Colonic mucosa (tissue), 4 donors: ENCODE measurements at regions of chr22 and their contacts with region 1.

Region 1: GRCh38 chr22:43901976-43902643 is 10.3 kb upstream of the PNPLA5 start:
- DNase-seq: no peak
- H3K4me3 ChIP-seq: no peak overlapping the region
- H3K27ac ChIP-seq: no peak overlapping the region
- H3K4me1 ChIP-seq: no peaks in the 10 kb centered on the region
- H3K27me3 ChIP-seq: no peaks in the 10 kb centered on the region
- CTCF ChIP-seq: no peak

Region 2: GRCh38 chr22:43537014-43537585 is 365.0 kb before region 1 on chr22:
- intact Hi-C with region 1: no loop called
- DNase-seq: no peak
- H3K4me3 ChIP-seq: no peak overlapping the region
- H3K27ac ChIP-seq: no peak overlapping the region
- H3K4me1 ChIP-seq: no peaks in the 10 kb centered on the region
- H3K27me3 ChIP-seq: no peaks in the 10 kb centered on the region
- CTCF ChIP-seq: no peak

Region 3: GRCh38 chr22:43848366-43849171 is 53.5 kb before region 1 on chr22:
- intact Hi-C with region 1: loop called (anchors 10 kb)
- DNase-seq: no peak
- H3K4me3 ChIP-seq: no peak overlapping the region
- H3K27ac ChIP-seq: no peak overlapping the region
- H3K4me1 ChIP-seq: no peaks in the 10 kb centered on the region
- H3K27me3 ChIP-seq: no peaks in the 10 kb centered on the region
- CTCF ChIP-seq: no peak

Region 4: DNA sequence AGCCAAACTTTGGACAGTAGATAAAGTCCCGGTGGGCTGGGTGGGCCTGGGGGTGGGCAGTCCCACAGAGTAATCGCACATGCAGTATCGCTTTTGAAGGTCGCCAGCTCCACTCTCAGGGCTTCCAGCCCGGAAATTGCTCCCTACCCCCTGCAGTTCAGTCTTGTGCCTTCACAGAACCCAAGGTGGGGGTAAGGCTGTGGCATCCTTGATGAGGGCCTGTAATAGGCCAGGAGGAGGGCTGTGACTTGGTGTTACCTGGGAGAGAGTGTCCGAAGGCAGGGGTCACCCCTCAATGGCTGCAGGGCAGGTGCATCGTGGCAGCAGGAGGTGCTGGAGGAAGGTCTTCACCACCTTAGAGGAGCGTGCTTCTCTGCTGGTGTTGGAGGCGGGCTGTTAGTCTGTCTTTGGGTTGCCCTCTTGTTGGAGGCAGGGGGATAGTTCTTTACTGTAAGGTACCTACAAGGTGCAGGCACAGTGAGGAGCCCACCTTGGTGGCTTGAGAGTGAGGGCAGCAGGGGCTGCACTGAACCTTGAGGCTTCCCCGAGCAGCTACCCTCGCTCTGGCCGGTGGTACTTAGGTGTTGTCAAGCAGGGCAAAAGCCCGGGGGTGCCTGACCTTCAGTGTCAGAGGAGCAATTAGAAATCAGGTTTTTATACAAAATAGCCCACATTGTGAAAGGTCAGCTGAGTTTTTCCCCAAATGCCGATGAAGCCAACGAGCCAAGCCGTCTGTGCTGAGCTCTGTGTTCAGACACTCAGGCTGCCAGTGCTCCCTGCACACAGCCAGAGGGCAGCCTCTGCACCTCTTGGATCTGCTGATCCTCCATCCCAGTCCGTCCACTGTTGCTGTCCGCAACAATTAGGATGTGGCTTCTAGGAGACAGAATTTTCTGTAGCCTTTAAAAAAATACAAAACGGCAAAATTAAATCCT is 75.0 kb after region 1 on chr22:
- intact Hi-C with region 1: no loop called
- DNase-seq: no peak
- H3K4me3 ChIP-seq: no peak overlapping the region
- H3K27ac ChIP-seq: no peak overlapping the region
- H3K4me1 ChIP-seq: no peaks in the 10 kb centered on the region
- H3K27me3 ChIP-seq: no peaks in the 10 kb centered on the region
- CTCF ChIP-seq: no peak

Region 5: DNA sequence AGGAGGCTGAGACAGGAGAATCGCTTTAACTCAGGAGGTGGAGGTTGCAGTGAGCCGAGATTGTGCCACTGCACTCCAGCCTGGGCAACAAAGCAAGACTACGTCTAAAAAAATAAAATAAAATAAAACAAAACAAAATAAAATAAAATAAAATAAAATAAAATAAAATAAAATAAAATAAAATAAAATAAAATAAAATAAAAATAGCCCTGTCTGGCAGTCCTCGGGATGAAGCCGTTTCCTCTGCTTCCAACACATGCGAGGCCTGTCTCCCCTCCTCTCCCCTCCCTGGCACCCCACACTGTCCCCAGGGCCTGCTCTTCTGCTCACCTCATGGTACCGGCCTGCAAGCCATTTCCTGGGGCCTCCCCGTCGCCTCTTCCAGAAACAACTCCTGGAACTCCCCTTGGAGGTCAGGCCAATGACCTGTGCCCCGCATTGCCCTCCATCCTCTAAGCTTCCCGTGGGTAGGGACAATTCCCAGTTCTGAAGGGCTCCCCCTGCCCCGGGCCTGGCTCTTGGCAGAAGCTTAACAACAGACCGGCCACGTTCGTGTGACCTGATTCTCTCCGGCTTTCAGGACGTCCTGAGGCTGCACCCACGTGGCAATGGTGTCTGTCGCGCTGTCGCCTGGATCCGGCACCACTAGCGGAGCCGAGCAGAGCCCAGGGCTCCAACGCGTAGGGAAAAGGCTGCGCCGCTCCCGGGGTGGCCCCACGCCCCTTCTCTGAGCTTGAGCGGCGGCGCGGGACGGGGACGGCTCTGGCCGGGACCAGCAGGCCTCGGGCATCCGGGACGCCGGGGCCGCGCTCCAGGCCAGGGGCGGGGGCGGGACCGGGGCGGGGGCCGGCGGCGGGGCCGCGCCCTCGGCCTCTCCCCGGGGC is 121.5 kb after region 1 on chr22:
- intact Hi-C with region 1: no loop called
- DNase-seq: peak; percentile 33
- H3K4me3 ChIP-seq: peak overlapping the region; percentile 42
- H3K27ac ChIP-seq: no peak overlapping the region
- H3K4me1 ChIP-seq: no peaks in the 10 kb centered on the region
- H3K27me3 ChIP-seq: peaks cover 4% of the 10 kb centered on the region
- CTCF ChIP-seq: no peak

Region 6: GRCh38 chr22:44068422-44069191 is 166.5 kb after region 1 on chr22:
- intact Hi-C with region 1: no loop called
- DNase-seq: no peak
- H3K4me3 ChIP-seq: no peak overlapping the region
- H3K27ac ChIP-seq: no peak overlapping the region
- H3K4me1 ChIP-seq: no peaks in the 10 kb centered on the region
- H3K27me3 ChIP-seq: no peaks in the 10 kb centered on the region
- CTCF ChIP-seq: no peak